ENCODE measurements at regions of chr11 and their contacts with region 1.

Region 1: DNA sequence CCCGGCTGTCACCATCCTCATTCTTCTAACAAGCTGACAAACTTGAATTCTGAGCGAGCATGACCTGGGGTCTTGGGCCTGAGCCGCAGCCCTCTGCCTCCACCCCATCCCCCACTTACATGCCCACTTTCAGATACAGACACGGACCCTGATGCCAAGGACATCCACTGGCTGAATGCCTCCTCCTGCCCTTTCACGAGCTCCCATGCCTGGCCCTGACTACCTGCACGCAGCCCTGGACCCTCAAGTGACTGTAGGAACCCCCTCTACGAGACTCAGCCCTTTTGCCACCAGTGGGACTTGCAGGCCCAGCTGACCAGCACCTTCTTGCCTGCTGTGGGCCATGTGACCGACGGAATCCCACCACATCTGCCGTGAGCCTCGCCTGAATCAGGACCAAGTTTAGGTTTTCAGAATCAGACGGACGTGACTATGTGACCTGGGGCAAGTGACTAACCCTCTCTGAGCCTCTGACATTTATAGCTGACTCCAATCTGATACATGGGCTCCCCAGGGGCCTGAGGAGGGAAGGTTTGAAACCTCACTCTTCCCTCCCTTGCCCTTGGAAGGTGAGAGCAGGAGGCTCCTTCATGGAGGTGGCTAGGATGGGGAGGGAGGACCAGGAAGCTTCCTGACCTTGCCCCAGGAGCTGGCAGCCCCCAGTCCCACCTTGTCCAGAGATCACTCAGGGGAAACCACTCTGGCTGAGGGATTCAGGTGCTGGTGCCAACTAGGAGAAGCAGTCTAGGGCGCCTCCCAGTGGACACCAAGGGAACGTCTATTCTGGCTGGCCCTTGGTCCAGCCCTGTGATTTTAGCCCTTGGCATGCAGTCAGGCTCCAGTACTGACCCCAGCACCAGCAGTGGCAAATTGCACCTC is 46.9 kb upstream of the SYT7 start:
- DNase-seq: peak; percentile 75
- H3K4me3 Mint-ChIP-seq: no peak overlapping the region
- H3K27ac Mint-ChIP-seq: peak overlapping the region; percentile 54
- H3K4me1 Mint-ChIP-seq: peaks cover 12% of the 10 kb centered on the region
- H3K27me3 Mint-ChIP-seq: no peaks in the 10 kb centered on the region
- CTCF ChIP-seq: peak; percentile 94

Region 2: DNA sequence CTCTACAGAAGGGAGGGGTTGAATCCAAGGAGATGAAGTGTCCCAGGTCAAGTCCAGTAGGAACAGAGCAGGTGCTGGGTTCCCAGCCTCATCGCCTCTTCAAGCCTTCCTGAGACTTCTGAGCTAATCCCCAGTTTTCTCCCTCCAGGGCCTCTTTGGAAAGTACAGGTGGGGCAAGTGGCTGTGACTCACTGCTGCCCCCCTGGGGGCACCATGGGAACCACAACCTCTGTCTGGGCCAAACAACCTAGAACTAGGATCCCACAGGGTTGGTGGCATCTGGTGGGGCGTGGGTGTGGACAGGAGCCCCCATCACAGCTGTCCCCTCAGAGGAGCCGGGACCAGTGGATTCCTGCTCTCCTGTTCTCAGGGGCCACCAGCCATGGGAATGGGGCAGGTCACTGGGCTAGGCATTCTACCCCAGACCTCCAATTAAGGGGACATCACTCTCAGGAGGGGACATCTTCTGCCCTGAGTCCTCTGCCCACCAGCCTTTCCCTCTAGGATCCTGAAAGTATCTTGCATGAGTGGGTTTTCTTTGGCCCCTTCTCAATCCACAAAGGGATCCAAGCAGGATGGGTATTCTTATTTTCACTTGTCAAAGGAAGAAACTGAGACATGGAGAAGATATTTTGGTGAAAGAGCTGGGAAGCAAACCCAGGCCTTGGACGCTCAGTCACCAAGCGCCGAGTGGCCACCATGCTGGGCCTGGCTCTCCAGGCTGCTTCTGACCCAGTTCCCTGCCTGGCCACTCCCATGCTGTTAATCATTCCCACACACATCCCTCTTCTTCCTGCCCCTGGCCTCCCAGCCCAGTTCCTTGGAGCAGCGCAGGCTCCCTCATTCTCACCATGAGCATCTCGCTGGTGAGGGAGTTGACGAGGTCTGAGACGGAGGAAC is 95.4 kb before region 1 on chr11:
- CTCF ChIA-PET with region 1: interaction called, 4 read pairs
- POLR2A ChIA-PET with region 1: no interaction called
- intact Hi-C with region 1: loop called (anchors 1 kb)
- DNase-seq: peak; percentile 67
- H3K4me3 Mint-ChIP-seq: no peak overlapping the region
- H3K27ac Mint-ChIP-seq: no peak overlapping the region
- H3K4me1 Mint-ChIP-seq: peaks cover 19% of the 10 kb centered on the region
- H3K27me3 Mint-ChIP-seq: no peaks in the 10 kb centered on the region
- CTCF ChIP-seq: peak; percentile 72

Region 3: GRCh38 chr11:61567286-61568061 is 60.3 kb before region 1 on chr11:
- CTCF ChIA-PET with region 1: interaction called, 17 read pairs
- POLR2A ChIA-PET with region 1: no interaction called
- intact Hi-C with region 1: no loop called
- DNase-seq: peak; percentile 78
- H3K4me3 Mint-ChIP-seq: no peak overlapping the region
- H3K27ac Mint-ChIP-seq: no peak overlapping the region
- H3K4me1 Mint-ChIP-seq: no peaks in the 10 kb centered on the region
- H3K27me3 Mint-ChIP-seq: peaks cover 13% of the 10 kb centered on the region
- CTCF ChIP-seq: peak; percentile 53

Region 4: GRCh38 chr11:61581030-61581928 is 46.5 kb before region 1 on chr11 and contains the start of gene SYT7:
- CTCF ChIA-PET with region 1: interaction called, 9 read pairs
- POLR2A ChIA-PET with region 1: interaction called, 4 read pairs
- intact Hi-C with region 1: loop called (anchors 1 kb)
- DNase-seq: peak; percentile 95
- H3K4me3 Mint-ChIP-seq: peak within 1 kb of the TSS; percentile 71
- H3K27ac Mint-ChIP-seq: no peak within 1 kb of the TSS
- H3K4me1 Mint-ChIP-seq: peaks cover 12% of the 10 kb centered on the region
- H3K27me3 Mint-ChIP-seq: no peaks in the 10 kb centered on the region
- CTCF ChIP-seq: no peak
- total RNA-seq, gene SYT7: 25.2 and 57.7 TPM in 2 replicates

Region 5: DNA sequence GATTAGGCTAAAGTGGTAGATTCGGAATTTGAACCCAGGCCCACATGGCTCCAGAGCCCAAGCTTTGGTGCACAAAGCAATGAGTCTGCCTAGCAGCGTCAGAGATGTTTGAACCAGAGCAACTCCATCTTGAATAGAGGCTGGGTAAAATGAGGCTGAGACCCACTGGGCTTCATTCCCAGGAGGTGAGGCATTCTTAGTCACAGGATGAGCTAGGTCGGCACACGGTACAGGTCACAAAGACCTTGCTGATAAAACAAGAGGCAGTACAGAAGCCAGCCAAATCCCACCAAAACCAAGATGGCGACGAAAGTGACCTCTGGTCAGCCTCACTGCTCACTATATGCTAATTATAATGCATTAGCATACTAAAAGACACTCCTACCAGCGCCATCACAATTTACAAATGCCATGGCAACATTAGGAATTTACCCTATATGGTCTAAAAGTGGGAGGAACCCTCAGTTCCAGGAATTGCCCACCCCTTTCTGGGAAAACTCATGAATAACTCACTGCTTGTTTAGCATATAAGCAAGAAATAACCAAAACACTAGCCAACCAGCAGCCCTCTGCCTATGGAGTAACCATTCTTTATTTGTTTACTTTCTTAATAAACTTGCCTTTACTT is 12.1 kb after region 1 on chr11:
- CTCF ChIA-PET with region 1: interaction called, 25 read pairs
- POLR2A ChIA-PET with region 1: no interaction called
- intact Hi-C with region 1: no loop called
- DNase-seq: no peak
- H3K4me3 Mint-ChIP-seq: no peak overlapping the region
- H3K27ac Mint-ChIP-seq: no peak overlapping the region
- H3K4me1 Mint-ChIP-seq: no peaks in the 10 kb centered on the region
- H3K27me3 Mint-ChIP-seq: peaks cover 27% of the 10 kb centered on the region
- CTCF ChIP-seq: no peak

Region 6: DNA sequence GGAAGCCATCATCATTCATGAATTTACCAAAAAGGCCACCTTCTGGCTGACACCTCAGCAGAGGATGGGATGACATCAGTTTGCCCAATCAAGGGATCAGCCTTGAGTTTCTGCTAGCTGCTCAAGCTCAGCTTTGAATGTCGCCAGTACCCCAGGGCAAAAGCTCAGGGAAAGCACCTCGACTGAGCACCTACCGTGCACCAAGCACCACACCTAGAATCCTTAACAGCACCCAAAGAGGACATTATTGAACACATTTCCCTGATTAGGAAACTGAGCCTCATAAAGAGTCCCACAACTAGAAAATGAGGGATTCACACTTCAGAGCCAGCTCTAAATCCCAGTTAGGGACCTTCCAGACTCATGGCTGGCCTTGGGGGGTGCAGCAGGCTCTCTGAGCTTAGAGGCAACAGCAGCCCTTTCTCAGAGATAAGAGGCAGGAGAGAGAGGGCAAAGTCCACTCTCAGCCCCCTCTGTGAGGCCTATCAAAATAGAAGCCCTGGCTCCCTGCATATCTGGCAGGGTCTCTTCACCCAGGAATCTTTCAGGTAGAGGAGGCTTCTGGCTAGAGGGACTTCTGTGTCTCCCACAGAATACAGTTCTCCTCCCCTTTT is 39.0 kb after region 1 on chr11:
- CTCF ChIA-PET with region 1: no interaction called
- POLR2A ChIA-PET with region 1: no interaction called
- intact Hi-C with region 1: no loop called
- DNase-seq: no peak
- H3K4me3 Mint-ChIP-seq: no peak overlapping the region
- H3K27ac Mint-ChIP-seq: no peak overlapping the region
- H3K4me1 Mint-ChIP-seq: no peaks in the 10 kb centered on the region
- H3K27me3 Mint-ChIP-seq: peaks cover 34% of the 10 kb centered on the region
- CTCF ChIP-seq: no peak

Region 7: GRCh38 chr11:61812771-61813411 is 185.1 kb after region 1 on chr11:
- CTCF ChIA-PET with region 1: no interaction called
- POLR2A ChIA-PET with region 1: no interaction called
- intact Hi-C with region 1: no loop called
- DNase-seq: no peak
- H3K4me3 Mint-ChIP-seq: no peak overlapping the region
- H3K27ac Mint-ChIP-seq: no peak overlapping the region
- H3K4me1 Mint-ChIP-seq: peaks cover 18% of the 10 kb centered on the region
- H3K27me3 Mint-ChIP-seq: no peaks in the 10 kb centered on the region
- CTCF ChIP-seq: no peak